A549 (cell line): ENCODE measurements at regions of chr7 and their contacts with region 1.

Region 1: GRCh38 chr7:54773472-54774399 is 14.7 kb upstream of the SEC61G start:
- DNase-seq: peak; percentile 69 to 93
- ATAC-seq: peak; percentile 96 to 98
- H3K4me3 ChIP-seq: peak overlapping the region; percentile 48
- H3K27ac ChIP-seq: peak overlapping the region; percentile 74 to 81
- H3K4me1 ChIP-seq: peaks cover 14% of the 10 kb centered on the region
- CTCF ChIP-seq: peak; percentile 93
- EP300 ChIP-seq: no peak
- POLR2A ChIP-seq: no peak
- RAD21 ChIP-seq: peak; percentile 94 to 99

Region 2: GRCh38 chr7:54817106-54817505 is 43.4 kb after region 1 on chr7:
- CTCF ChIA-PET with region 1: interaction called, 10 read pairs
- POLR2A ChIA-PET with region 1: no interaction called
- DNase-seq: no peak
- ATAC-seq: no peak
- H3K4me3 ChIP-seq: no peak overlapping the region
- H3K27ac ChIP-seq: peak overlapping the region in 1 of 2 experiments; percentile 17; a peak in 1 of 6 replicates
- H3K4me1 ChIP-seq: peaks cover 26% of the 10 kb centered on the region
- CTCF ChIP-seq: no peak
- EP300 ChIP-seq: no peak
- POLR2A ChIP-seq: no peak
- RAD21 ChIP-seq: no peak

Region 3: DNA sequence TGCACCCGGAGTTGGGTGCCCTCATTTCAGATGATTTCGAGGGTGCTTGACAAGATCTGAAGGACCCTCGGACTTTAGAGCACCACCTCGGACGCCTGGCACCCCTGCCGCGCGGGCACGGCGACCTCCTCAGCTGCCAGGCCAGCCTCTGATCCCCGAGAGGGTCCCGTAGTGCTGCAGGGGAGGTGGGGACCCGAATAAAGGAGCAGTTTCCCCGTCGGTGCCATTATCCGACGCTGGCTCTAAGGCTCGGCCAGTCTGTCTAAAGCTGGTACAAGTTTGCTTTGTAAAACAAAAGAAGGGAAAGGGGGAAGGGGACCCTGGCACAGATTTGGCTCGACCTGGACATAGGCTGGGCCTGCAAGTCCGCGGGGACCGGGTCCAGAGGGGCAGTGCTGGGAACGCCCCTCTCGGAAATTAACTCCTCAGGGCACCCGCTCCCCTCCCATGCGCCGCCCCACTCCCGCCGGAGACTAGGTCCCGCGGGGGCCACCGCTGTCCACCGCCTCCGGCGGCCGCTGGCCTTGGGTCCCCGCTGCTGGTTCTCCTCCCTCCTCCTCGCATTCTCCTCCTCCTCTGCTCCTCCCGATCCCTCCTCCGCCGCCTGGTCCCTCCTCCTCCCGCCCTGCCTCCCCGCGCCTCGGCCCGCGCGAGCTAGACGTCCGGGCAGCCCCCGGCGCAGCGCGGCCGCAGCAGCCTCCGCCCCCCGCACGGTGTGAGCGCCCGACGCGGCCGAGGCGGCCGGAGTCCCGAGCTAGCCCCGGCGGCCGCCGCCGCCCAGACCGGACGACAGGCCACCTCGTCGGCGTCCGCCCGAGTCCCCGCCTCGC is 244.8 kb after region 1 on chr7 and contains the start of gene EGFR:
- CTCF ChIA-PET with region 1: interaction called, 10 read pairs
- POLR2A ChIA-PET with region 1: no interaction called
- DNase-seq: peak; percentile 75 to 78
- ATAC-seq: peak; percentile 86
- H3K4me3 ChIP-seq: peak within 1 kb of the TSS; percentile 95
- H3K27ac ChIP-seq: peak within 1 kb of the TSS; percentile 97 to 98
- H3K4me1 ChIP-seq: peaks cover 32% of the 10 kb centered on the region
- CTCF ChIP-seq: no peak
- EP300 ChIP-seq: no peak
- POLR2A ChIP-seq: peak; percentile 72
- RAD21 ChIP-seq: peak; percentile 9 to 38; a peak in 3 of 5 replicates
- polyA plus RNA-seq, gene EGFR: 59.5 and 61.4 TPM in 2 replicates

Region 4: GRCh38 chr7:55132890-55133551 is 359.3 kb after region 1 on chr7:
- CTCF ChIA-PET with region 1: interaction called, 12 read pairs
- POLR2A ChIA-PET with region 1: no interaction called
- DNase-seq: peak; percentile 88 to 91
- ATAC-seq: peak; percentile 83
- H3K4me3 ChIP-seq: peak overlapping the region; percentile 7; the same call in 1 of the 3 replicates
- H3K27ac ChIP-seq: peak overlapping the region; percentile 93 to 98
- H3K4me1 ChIP-seq: peaks cover 71% of the 10 kb centered on the region
- CTCF ChIP-seq: no peak
- EP300 ChIP-seq: peak; percentile 64 to 67; a peak in 2 of 5 replicates
- POLR2A ChIP-seq: no peak
- RAD21 ChIP-seq: peak; percentile 25 to 38; a peak in 4 of 5 replicates

Region 5: GRCh38 chr7:55212838-55213539 is 439.3 kb after region 1 on chr7:
- CTCF ChIA-PET with region 1: interaction called, 18 read pairs
- POLR2A ChIA-PET with region 1: no interaction called
- DNase-seq: no peak
- ATAC-seq: peak; percentile 51 to 58; a peak in 5 of 6 replicates
- H3K4me3 ChIP-seq: no peak overlapping the region
- H3K27ac ChIP-seq: no peak overlapping the region
- H3K4me1 ChIP-seq: peaks cover 6% of the 10 kb centered on the region; the same call in 2 of the 3 replicates
- CTCF ChIP-seq: no peak
- EP300 ChIP-seq: no peak
- POLR2A ChIP-seq: no peak
- RAD21 ChIP-seq: no peak

Region 6: GRCh38 chr7:55271069-55271626 is 497.4 kb after region 1 on chr7:
- CTCF ChIA-PET with region 1: interaction called, 18 read pairs
- POLR2A ChIA-PET with region 1: no interaction called
- DNase-seq: peak in 1 of 2 experiments; percentile 16
- ATAC-seq: peak in 1 of 2 experiments; percentile 63; a peak in 3 of 6 replicates
- H3K4me3 ChIP-seq: no peak overlapping the region
- H3K27ac ChIP-seq: no peak overlapping the region
- H3K4me1 ChIP-seq: peaks cover 3% of the 10 kb centered on the region; the same call in 1 of the 3 replicates
- CTCF ChIP-seq: peak; percentile 36
- EP300 ChIP-seq: no peak
- POLR2A ChIP-seq: no peak
- RAD21 ChIP-seq: peak; percentile 35 to 68; a peak in 4 of 5 replicates